A549 (cell line): ENCODE measurements at regions of chr12 and their contacts with region 1.

Region 1: DNA sequence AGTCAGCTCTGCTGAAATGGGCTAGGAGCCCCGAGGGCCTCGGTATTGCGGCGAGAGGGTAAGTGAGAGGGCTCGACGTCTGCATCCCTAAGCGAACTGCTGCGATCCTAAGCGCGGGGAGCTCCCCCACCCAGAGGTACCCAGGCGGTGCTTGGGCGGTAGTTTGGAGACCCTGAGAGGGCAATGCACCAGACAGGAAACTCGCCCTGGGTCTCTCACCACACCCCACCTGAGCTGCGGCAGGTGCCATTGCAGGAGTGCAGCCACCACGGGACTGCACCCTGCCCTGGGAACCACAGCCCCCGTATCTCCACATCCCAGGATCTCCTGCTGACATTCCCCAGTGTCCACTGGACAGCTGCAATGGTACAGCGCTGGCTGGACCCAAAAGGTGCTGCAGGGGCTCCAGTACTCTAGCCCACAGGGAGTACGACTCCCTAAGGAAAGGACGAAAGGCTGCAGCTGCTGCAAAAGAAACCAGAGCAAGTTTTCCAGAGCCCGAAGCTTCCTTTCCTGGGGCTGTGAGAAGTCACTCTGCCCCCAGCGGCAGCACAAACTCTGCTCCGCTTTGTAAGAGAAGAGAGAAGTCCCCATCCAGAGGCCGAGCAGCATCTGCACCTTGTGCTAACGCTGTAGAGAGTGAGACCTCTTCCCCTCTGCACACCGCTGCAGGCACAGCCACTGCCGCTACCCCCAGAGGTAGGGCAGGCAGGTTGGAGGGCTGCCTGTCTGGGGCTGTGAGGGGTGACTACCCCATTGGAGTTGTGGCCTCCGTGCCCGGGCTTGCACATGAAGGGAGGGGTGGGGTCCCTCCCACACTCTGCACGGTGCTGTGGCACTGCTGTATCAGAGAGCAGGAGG is 31.1 kb upstream of the MON2 start:
- DNase-seq: peak; percentile 77 to 80
- ATAC-seq: peak; percentile 93 to 96
- H3K4me3 ChIP-seq: peak overlapping the region; percentile 51
- H3K27ac ChIP-seq: peak overlapping the region; percentile 0 to 49; a peak in 5 of 6 replicates
- H3K4me1 ChIP-seq: 0 out of 3 replicates have a peak, but pooled peaks cover 3% of the 10 kb centered on the region
- CTCF ChIP-seq: peak; percentile 61
- EP300 ChIP-seq: no peak
- POLR2A ChIP-seq: no peak
- RAD21 ChIP-seq: peak; percentile 36 to 42; a peak in 4 of 5 replicates

Region 2: GRCh38 chr12:62409068-62409467 is 26.5 kb before region 1 on chr12:
- CTCF ChIA-PET with region 1: interaction called, 11 read pairs
- POLR2A ChIA-PET with region 1: no interaction called
- DNase-seq: no peak
- ATAC-seq: no peak
- H3K4me3 ChIP-seq: no peak overlapping the region
- H3K27ac ChIP-seq: no peak overlapping the region
- H3K4me1 ChIP-seq: no peaks in the 10 kb centered on the region
- CTCF ChIP-seq: no peak
- EP300 ChIP-seq: no peak
- POLR2A ChIP-seq: no peak
- RAD21 ChIP-seq: no peak

Region 3: GRCh38 chr12:62457681-62458080 is 22.1 kb after region 1 on chr12:
- CTCF ChIA-PET with region 1: interaction called, 14 read pairs
- POLR2A ChIA-PET with region 1: no interaction called
- DNase-seq: no peak
- ATAC-seq: no peak
- H3K4me3 ChIP-seq: no peak overlapping the region
- H3K27ac ChIP-seq: no peak overlapping the region
- H3K4me1 ChIP-seq: no peaks in the 10 kb centered on the region
- CTCF ChIP-seq: no peak
- EP300 ChIP-seq: no peak
- POLR2A ChIP-seq: no peak
- RAD21 ChIP-seq: no peak

Region 4: GRCh38 chr12:62799126-62799736 is 363.7 kb after region 1 on chr12:
- CTCF ChIA-PET with region 1: interaction called, 125 read pairs
- POLR2A ChIA-PET with region 1: no interaction called
- DNase-seq: peak; percentile 60 to 83
- ATAC-seq: peak; percentile 76 to 92
- H3K4me3 ChIP-seq: no peak overlapping the region
- H3K27ac ChIP-seq: peak overlapping the region; percentile 40 to 70
- H3K4me1 ChIP-seq: peaks cover 26% of the 10 kb centered on the region
- CTCF ChIP-seq: peak; percentile 94
- EP300 ChIP-seq: no peak
- POLR2A ChIP-seq: no peak
- RAD21 ChIP-seq: peak; percentile 94 to 98

Region 5: GRCh38 chr12:63068857-63069442 is 633.4 kb after region 1 on chr12:
- CTCF ChIA-PET with region 1: interaction called, 16 read pairs
- POLR2A ChIA-PET with region 1: interaction called, 4 read pairs
- DNase-seq: peak; percentile 14 to 71
- ATAC-seq: peak; percentile 63 to 83; a peak in 3 of 6 replicates
- H3K4me3 ChIP-seq: no peak overlapping the region
- H3K27ac ChIP-seq: no peak overlapping the region
- H3K4me1 ChIP-seq: no peaks in the 10 kb centered on the region
- CTCF ChIP-seq: peak; percentile 84
- EP300 ChIP-seq: no peak
- POLR2A ChIP-seq: no peak
- RAD21 ChIP-seq: peak; percentile 84 to 86